ENCODE measurements at regions of chr2 and their contacts with region 1.

Region 1: GRCh38 chr2:43226558-43226954 is at the start of gene ZFP36L2:
- H3K4me3 Mint-ChIP-seq: peak within 1 kb of the TSS; percentile 93
- H3K27ac Mint-ChIP-seq: peak within 1 kb of the TSS; percentile 98
- H3K4me1 Mint-ChIP-seq: peaks cover 43% of the 10 kb centered on the region
- H3K27me3 Mint-ChIP-seq: no peaks in the 10 kb centered on the region

Region 2: GRCh38 chr2:42859006-42859552 is 367.5 kb before region 1 on chr2:
- intact Hi-C with region 1: loop called (anchors 1 kb)
- H3K4me3 Mint-ChIP-seq: no peak overlapping the region
- H3K27ac Mint-ChIP-seq: no peak overlapping the region
- H3K4me1 Mint-ChIP-seq: peaks cover 27% of the 10 kb centered on the region
- H3K27me3 Mint-ChIP-seq: peaks cover 3% of the 10 kb centered on the region

Region 3: GRCh38 chr2:42974721-42975717 is 251.5 kb before region 1 on chr2:
- intact Hi-C with region 1: loop called (anchors 1 kb)
- H3K4me3 Mint-ChIP-seq: peak overlapping the region; percentile 71
- H3K27ac Mint-ChIP-seq: peak overlapping the region; percentile 74
- H3K4me1 Mint-ChIP-seq: peaks cover 67% of the 10 kb centered on the region
- H3K27me3 Mint-ChIP-seq: peaks cover 7% of the 10 kb centered on the region

Region 4: DNA sequence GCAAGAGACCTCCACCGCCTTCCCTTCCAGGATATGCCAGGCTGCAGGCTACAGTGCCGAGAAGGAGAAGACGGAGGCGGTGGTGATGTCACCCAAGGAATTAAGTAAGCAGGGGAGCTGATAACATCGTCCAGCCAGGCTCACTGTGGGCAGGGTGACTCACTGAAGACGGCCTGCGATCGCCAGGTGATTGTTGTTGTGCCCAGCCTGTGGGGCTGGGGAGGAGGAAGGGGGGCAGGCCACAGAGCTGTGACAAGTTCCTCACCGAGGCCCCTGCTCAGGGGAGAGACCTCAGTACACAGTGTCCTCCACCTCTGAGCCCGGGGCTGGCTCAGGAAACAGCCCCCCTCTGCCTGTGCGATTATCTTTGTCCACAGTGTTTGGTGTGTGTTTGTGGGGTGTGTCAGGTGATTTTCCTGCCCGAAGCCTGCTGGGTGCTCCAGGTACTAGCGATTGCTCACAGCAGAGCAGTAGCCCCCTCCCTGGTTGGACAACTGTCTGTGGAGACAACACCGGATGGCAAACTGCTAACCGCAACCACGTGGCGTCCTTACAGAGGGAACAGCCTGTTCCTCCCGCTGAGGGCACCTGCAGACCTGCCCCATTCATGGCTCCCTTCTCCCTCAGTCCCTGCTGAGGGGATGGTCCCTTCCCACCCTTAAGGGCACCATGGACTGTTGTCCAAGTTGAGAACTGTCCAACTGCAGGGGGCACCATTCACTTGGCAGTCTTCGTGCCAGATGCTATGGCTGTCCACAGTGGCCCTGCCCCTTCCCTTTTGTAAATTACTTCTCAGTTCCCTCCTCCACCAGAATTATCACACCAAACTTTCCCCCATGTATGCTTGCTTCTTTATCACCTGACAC is 95.3 kb before region 1 on chr2:
- intact Hi-C with region 1: loop called (anchors 2 kb)
- H3K4me3 Mint-ChIP-seq: peak overlapping the region; percentile 17
- H3K27ac Mint-ChIP-seq: peak overlapping the region; percentile 84
- H3K4me1 Mint-ChIP-seq: peaks cover 91% of the 10 kb centered on the region
- H3K27me3 Mint-ChIP-seq: no peaks in the 10 kb centered on the region

Region 5: GRCh38 chr2:43542285-43542937 is 315.9 kb after region 1 on chr2:
- intact Hi-C with region 1: loop called (anchors 5 kb)
- H3K4me3 Mint-ChIP-seq: no peak overlapping the region
- H3K27ac Mint-ChIP-seq: no peak overlapping the region
- H3K4me1 Mint-ChIP-seq: peaks cover 15% of the 10 kb centered on the region
- H3K27me3 Mint-ChIP-seq: no peaks in the 10 kb centered on the region

Region 6: DNA sequence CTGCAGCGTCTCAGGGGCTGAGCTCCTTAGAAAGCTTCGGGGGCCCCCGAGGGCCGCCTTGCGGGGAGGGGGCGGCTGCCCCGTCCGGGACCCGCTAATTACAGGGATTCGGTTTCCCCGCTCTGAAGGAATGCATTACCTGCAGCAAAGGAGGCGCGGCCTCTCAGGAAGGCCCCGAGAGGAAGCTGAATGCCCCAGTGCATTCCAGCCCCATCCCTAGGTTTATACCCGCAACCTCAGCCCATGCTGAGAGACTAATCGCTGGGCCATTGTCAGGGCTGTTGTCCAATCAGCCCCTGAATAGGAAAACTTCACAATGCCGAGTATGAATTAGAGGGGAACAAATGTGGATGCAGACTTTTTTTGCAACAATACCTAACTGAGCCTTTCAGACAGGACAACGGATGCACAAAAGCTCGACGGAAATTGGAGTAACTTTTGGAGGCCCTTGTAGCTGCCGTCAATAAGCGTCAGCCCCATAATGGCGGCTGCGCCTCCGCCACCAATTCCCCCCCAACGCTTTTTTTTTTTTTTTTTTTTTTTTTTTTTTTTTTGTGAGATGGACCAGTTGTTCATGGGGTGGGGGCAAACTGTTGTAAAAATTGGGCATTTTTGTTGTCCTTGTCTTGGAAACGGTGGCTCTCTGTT is 1576.3 kb after region 1 on chr2:
- intact Hi-C with region 1: no loop called
- H3K4me3 Mint-ChIP-seq: no peak overlapping the region
- H3K27ac Mint-ChIP-seq: no peak overlapping the region
- H3K4me1 Mint-ChIP-seq: peaks cover 5% of the 10 kb centered on the region
- H3K27me3 Mint-ChIP-seq: peaks cover 94% of the 10 kb centered on the region